H1 (cell line): ENCODE measurements at regions of chr17 and their contacts with region 1.

Region 1: GRCh38 chr17:7834962-7835813 is 1.2 kb downstream of the KDM6B start:
- DNase-seq: peak; percentile 89 to 97
- H3K4me3 ChIP-seq: peak overlapping the region; percentile 70 to 77 (median 74)
- H3K27ac ChIP-seq: peak overlapping the region; percentile 85
- H3K4me1 ChIP-seq: peaks cover 5 to 24% (median 14%) of the 10 kb centered on the region in 4 experiments
- H3K27me3 ChIP-seq: peaks cover 11 to 56% (median 47%) of the 10 kb centered on the region in 4 experiments
- CTCF ChIP-seq: peak; percentile 69 to 88 (median 73)
- EP300 ChIP-seq: no peak
- POLR2A ChIP-seq: peak in 1 of 2 experiments; percentile 66; a peak in 2 of 3 replicates
- RAD21 ChIP-seq: peak; percentile 49 to 62; a peak in 3 of 4 replicates

Region 2: DNA sequence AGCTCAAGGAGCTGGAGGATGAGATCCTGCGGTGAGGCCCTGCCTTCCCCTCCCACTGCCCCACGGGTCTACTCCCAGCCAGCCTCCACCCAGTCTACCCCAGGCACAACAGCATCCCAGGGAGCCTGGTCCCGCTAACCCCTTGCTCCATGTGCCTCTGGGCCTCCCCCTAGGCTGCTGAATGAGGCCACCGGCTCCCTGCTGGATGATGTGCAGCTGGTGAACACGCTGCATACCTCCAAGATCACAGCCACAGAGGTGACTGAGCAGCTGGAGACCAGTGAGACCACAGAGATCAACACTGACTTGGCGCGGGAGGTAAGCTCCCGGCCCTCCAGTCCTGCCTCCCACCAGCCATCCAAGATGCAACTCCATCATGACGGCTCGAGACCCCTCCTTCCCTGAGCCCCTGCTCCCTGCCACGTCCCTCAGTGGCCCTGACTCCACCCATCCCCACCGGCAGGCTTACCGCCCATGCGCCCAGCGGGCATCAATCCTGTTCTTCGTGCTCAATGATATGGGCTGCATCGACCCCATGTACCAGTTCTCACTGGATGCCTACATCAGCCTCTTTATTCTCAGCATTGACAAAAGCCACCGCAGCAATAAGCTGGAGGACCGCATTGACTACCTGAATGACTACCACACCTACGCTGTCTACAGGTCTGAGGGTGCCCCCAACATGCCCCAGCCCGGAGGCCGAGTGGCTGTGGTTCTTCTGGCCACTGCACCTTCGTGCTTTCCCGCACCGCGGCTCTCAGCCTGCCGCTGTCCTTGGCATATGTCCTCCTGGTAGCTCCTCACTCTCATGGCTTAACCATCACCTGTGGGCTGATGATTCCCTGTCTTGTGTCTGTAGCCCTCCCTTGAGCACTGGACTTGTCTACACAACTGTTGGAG is 16.2 kb before region 1 on chr17:
- CTCF ChIA-PET with region 1: interaction called, 23 read pairs
- POLR2A ChIA-PET with region 1: interaction called, 5 read pairs
- DNase-seq: no peak
- H3K4me3 ChIP-seq: no peak overlapping the region
- H3K27ac ChIP-seq: no peak overlapping the region
- H3K4me1 ChIP-seq: peaks cover 0 to 7% (median 5%) of the 10 kb centered on the region in 4 experiments; a peak in 5 of 7 replicates
- H3K27me3 ChIP-seq: peaks cover 0 to 4% (median 3%) of the 10 kb centered on the region in 4 experiments; a peak in 5 of 7 replicates
- CTCF ChIP-seq: no peak
- EP300 ChIP-seq: no peak
- POLR2A ChIP-seq: no peak
- RAD21 ChIP-seq: no peak

Region 3: GRCh38 chr17:7851438-7852256 is 16.5 kb after region 1 on chr17:
- CTCF ChIA-PET with region 1: interaction called, 44 read pairs
- POLR2A ChIA-PET with region 1: interaction called, 34 read pairs
- DNase-seq: peak; percentile 82 to 95
- H3K4me3 ChIP-seq: peak overlapping the region; percentile 39 to 65 (median 52)
- H3K27ac ChIP-seq: no peak overlapping the region
- H3K4me1 ChIP-seq: peaks cover 0 to 37% (median 31%) of the 10 kb centered on the region in 4 experiments; a peak in 6 of 7 replicates
- H3K27me3 ChIP-seq: peaks cover 32 to 49% (median 48%) of the 10 kb centered on the region in 4 experiments
- CTCF ChIP-seq: peak; percentile 89 to 96 (median 96)
- EP300 ChIP-seq: no peak
- POLR2A ChIP-seq: peak in 1 of 2 experiments; percentile 34; a peak in 1 of 3 replicates
- RAD21 ChIP-seq: peak; percentile 84 to 88

Region 4: GRCh38 chr17:7856883-7857723 is 21.9 kb after region 1 on chr17 and contains the start of gene NAA38:
- CTCF ChIA-PET with region 1: interaction called, 44 read pairs
- POLR2A ChIA-PET with region 1: interaction called, 34 read pairs
- DNase-seq: peak; percentile 92 to 94
- H3K4me3 ChIP-seq: peak within 1 kb of the TSS; percentile 70 to 86 (median 80)
- H3K27ac ChIP-seq: peak within 1 kb of the TSS; percentile 97
- H3K4me1 ChIP-seq: peaks cover 0 to 30% (median 26%) of the 10 kb centered on the region in 4 experiments; a peak in 6 of 7 replicates
- H3K27me3 ChIP-seq: peaks cover 30 to 49% (median 44%) of the 10 kb centered on the region in 4 experiments
- CTCF ChIP-seq: peak; percentile 31 to 54 (median 45); a peak in 3 of 4 replicates
- EP300 ChIP-seq: no peak
- POLR2A ChIP-seq: no peak; a peak in 1 of 3 replicates
- RAD21 ChIP-seq: peak; percentile 3 to 35; a peak in 2 of 4 replicates
- total RNA-seq, gene NAA38: 27.0 and 30.2 TPM in 2 replicates